Ovary (tissue), 10 donors: ENCODE measurements at regions of chr6 and their contacts with region 1.

Region 1: GRCh38 chr6:1396952-1397868 is 7.8 kb downstream of the FOXF2 start:
- DNase-seq: peak; percentile 23 to 72 (median 51)
- H3K4me3 ChIP-seq: no peak overlapping the region
- H3K27ac ChIP-seq: no peak overlapping the region
- H3K4me1 ChIP-seq: no peaks in the 10 kb centered on the region
- H3K27me3 ChIP-seq: no peaks in the 10 kb centered on the region
- CTCF ChIP-seq: peak in 2 of 3 donors; percentile 43 to 45
- EP300 ChIP-seq: no peak
- POLR2A ChIP-seq: no peak

Region 2: GRCh38 chr6:593139-593906 is 803.9 kb before region 1 on chr6:
- intact Hi-C with region 1: loop called (anchors 5 to 10 kb)
- DNase-seq: peak in 4 of 5 donors; percentile 37 to 64 (median 50)
- H3K4me3 ChIP-seq: no peak overlapping the region
- H3K27ac ChIP-seq: no peak overlapping the region
- H3K4me1 ChIP-seq: no peaks in the 10 kb centered on the region
- H3K27me3 ChIP-seq: no peaks in the 10 kb centered on the region
- CTCF ChIP-seq: peak; percentile 38 to 62 (median 58)
- EP300 ChIP-seq: no peak
- POLR2A ChIP-seq: no peak